ENCODE measurements at regions of chr3 and their contacts with region 1.

Region 1: DNA sequence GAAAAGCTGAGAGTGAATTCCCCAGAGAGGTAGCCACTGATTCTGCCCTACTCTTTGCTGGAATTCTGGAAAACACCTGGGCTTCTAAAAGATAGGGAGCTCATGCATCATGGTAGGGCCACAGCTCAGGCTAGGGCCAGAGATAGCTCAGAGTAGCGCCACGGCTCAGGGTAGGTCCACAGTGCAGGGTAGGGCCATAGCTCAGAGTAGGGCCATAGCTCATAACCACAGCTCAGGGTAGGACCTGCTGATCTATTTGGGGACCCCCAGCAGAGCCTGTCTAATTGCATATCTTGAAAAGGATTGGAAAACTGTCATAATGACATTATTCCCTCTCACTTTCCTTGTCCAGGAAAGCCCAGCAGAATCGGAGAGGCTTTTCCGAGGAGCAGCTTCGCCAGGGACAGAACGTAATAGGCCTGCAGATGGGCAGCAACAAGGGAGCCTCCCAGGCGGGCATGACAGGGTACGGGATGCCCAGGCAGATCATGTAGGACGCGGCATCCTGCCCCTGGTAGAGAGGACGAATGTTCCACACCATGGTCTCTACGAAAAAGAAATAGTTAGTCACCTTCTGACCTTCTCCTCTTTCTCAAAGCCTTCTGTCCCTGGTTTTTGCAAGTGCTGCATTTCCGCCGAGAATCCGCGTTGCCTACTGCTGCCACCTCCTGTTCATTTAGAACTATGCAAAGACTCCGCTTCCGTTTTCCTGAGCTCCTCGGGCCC is 14.5 kb downstream of the TAGLN3 start:
- DNase-seq: peak; percentile 82
- H3K4me3 Mint-ChIP-seq: no peak overlapping the region
- H3K27ac Mint-ChIP-seq: peak overlapping the region; percentile 40
- H3K4me1 Mint-ChIP-seq: peaks cover 19% of the 10 kb centered on the region
- H3K27me3 Mint-ChIP-seq: no peaks in the 10 kb centered on the region

Region 2: GRCh38 chr3:111895079-111895478 is 118.1 kb before region 1 on chr3:
- CTCF ChIA-PET with region 1: interaction called, 15 read pairs
- POLR2A ChIA-PET with region 1: no interaction called
- intact Hi-C with region 1: no loop called
- DNase-seq: no peak
- H3K4me3 Mint-ChIP-seq: no peak overlapping the region
- H3K27ac Mint-ChIP-seq: no peak overlapping the region
- H3K4me1 Mint-ChIP-seq: peaks cover 7% of the 10 kb centered on the region
- H3K27me3 Mint-ChIP-seq: no peaks in the 10 kb centered on the region

Measured in activated CD4-positive, alpha-beta memory T cell treated with anti-CD3 and anti-CD28 coated beads for 36 hours (primary cell).